Caco-2 (cell line): ENCODE measurements at regions of chr10 and their contacts with region 1.

Region 1: DNA sequence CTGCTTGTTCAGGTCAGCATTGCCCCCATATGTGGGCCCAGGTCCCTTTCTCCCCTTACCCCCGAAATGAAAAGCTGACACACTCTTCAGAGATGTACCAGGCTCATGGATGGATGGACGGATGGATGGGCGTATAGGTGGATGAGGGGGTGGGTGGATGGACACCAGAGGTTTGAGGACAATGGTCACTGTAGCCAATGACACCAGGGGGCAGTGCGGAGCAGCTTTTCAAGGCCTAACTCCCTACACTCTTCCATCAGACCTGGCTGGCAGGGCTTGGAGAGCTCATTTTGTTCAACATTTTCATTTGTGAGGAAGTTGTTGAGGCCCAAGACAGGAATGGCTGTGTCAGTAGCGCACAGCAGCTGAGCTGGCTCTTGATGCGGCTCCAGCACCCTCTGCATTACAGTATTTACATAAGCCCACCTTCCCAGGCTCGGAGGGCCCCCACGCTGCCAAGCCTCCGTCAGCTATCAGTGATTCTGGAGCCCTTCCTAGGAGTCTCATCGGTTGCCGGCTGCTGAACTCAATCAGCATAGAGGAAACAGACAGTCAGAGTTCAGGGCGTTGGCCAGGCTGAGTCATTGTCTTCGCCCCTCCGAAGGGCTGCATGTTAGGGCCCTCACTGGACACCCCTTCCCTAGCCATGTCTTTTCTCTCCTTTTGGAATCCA is 11.6 kb upstream of the FFAR4 start:
- DNase-seq: peak; percentile 80 to 84
- H3K4me3 ChIP-seq: no peak overlapping the region
- H3K4me3 Mint-ChIP-seq: no peak overlapping the region
- H3K27ac Mint-ChIP-seq: peak overlapping the region; percentile 53
- H3K4me1 ChIP-seq: peaks cover 43% of the 10 kb centered on the region
- H3K4me1 Mint-ChIP-seq: peaks cover 32% of the 10 kb centered on the region
- H3K27me3 ChIP-seq: no peaks in the 10 kb centered on the region
- H3K27me3 Mint-ChIP-seq: no peaks in the 10 kb centered on the region
- CTCF ChIP-seq: peak; percentile 61 to 89

Region 2: DNA sequence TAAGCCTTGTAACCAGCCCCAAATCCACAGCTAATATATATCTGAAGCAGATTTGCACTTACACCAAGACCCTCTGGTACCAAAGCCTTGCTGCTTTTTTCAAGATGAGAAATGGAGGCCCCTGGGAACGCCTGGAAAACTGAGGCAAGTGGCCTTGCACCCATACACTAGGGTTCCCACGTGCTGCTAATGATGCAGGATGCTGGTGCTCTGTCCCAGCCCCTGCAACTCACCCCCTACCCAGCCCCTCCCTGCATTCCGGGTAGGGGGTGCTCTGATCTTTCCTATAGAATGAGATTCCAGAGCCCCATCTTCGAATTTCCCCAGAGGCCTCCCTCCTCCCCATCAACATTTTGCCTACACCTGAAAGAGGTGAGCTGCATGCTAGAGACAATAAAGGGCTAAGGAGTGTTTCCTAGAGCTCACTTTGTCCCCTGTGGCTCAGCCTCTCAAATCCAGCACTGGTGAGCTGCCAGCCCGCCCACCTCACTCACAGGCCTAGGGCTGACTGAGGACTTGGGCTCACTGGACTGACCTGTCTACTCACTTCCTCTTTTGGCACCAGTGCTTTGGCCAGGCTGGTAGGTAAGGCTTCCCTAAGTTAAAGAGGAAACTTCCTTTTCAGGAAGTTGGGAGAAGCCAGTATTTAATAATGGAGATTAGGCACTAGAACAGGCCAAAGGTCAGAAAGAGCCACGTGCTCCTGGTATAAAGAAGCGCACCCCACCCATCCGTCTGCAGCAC is 36.3 kb after region 1 on chr10:
- CTCF ChIA-PET with region 1: interaction called, 10 read pairs
- POLR2A ChIA-PET with region 1: no interaction called
- intact Hi-C with region 1: loop called (anchors 5 kb)
- DNase-seq: peak in 1 of 2 experiments; percentile 23
- H3K4me3 ChIP-seq: no peak overlapping the region
- H3K4me3 Mint-ChIP-seq: peak overlapping the region; percentile 11
- H3K27ac Mint-ChIP-seq: peak overlapping the region; percentile 67
- H3K4me1 ChIP-seq: peaks cover 21% of the 10 kb centered on the region
- H3K4me1 Mint-ChIP-seq: peaks cover 15% of the 10 kb centered on the region
- H3K27me3 ChIP-seq: no peaks in the 10 kb centered on the region
- H3K27me3 Mint-ChIP-seq: no peaks in the 10 kb centered on the region
- CTCF ChIP-seq: no peak

Region 3: DNA sequence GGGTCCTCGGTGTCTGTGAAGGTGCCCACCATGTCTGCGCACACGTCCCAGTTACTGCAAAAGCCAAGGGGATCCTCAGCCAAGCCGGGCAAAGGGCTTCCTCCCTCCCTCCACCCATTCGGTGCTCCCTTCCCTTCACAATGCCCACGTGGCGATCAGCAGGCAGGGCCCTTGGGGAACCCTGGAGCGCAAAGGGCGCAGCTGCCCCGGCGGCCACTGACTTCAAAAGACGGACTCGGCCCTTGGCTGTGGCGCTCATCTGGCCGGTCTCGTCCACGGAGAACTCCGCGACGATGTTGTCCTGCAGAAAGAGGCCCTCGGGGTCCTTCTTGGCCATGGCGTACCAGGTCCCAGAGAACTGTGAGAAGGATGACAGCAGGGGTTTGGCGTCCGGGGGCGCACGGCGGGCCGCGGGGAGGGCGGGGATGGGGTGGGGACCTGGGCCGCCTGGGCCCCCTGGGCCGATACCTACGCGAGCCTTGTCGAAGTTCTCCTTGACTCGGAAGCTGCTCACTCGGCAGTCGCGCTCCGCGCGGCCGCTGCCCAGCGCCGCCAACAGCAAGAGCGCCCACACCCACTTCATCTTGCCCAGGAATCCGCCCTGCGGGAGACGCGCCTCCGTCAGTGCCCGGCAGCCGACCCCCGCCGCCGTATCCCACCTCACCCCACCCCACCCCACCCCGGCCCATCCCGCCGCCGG is 45.7 kb after region 1 on chr10:
- CTCF ChIA-PET with region 1: interaction called, 3 read pairs
- POLR2A ChIA-PET with region 1: no interaction called
- intact Hi-C with region 1: loop called (anchors 2 kb)
- DNase-seq: no peak
- H3K4me3 ChIP-seq: peak overlapping the region; percentile 87
- H3K4me3 Mint-ChIP-seq: peak overlapping the region; percentile 77
- H3K27ac Mint-ChIP-seq: no peak overlapping the region
- H3K4me1 ChIP-seq: peaks cover 22% of the 10 kb centered on the region
- H3K4me1 Mint-ChIP-seq: peaks cover 12% of the 10 kb centered on the region
- H3K27me3 ChIP-seq: no peaks in the 10 kb centered on the region
- H3K27me3 Mint-ChIP-seq: no peaks in the 10 kb centered on the region
- CTCF ChIP-seq: no peak

Region 4: DNA sequence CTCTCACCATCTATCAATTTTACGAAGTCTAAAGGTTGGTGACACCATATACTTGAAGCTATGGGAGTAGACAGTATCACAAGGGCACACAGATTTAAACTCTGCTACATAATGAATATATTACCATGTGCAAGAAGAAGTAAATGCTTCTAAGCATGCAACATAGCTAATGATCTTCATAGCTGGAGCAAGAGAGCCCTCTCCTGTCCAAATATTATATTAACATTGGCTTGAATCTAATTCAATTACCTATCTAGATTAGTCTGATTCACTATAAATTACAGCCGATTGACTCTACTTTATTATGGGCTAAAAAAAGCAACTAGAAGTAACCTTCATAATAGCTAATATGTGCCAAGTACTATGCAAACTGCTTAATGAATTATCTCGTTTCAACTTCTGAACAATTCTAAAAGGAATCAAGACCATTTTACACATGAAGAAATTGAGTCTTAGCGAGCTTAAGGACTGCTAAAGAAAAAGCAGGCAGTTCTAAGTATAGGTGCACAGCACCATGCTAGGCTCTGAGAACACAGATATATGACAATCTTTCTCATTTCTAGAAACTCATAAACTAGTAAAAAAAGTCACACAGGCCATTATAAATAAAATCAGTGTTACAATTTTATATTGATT is 125.6 kb after region 1 on chr10:
- CTCF ChIA-PET with region 1: interaction called, 60 read pairs
- POLR2A ChIA-PET with region 1: no interaction called
- intact Hi-C with region 1: loop called (anchors 1 kb)
- DNase-seq: peak in 1 of 2 experiments; percentile 56
- H3K4me3 ChIP-seq: no peak overlapping the region
- H3K4me3 Mint-ChIP-seq: no peak overlapping the region
- H3K27ac Mint-ChIP-seq: no peak overlapping the region
- H3K4me1 ChIP-seq: peaks cover 16% of the 10 kb centered on the region; the same call in 1 of the 2 replicates
- H3K4me1 Mint-ChIP-seq: peaks cover 7% of the 10 kb centered on the region
- H3K27me3 ChIP-seq: no peaks in the 10 kb centered on the region
- H3K27me3 Mint-ChIP-seq: no peaks in the 10 kb centered on the region
- CTCF ChIP-seq: peak; percentile 30 to 66